Calu3 (cell line): ENCODE measurements at regions of chr2 and their contacts with region 1.

Region 1: GRCh38 chr2:8477552-8478470 is 204.0 kb upstream of the ID2 start:
- DNase-seq: no peak
- H3K4me3 Mint-ChIP-seq: no peak overlapping the region
- H3K27ac Mint-ChIP-seq: peak overlapping the region; percentile 86
- H3K4me1 Mint-ChIP-seq: peaks cover 77% of the 10 kb centered on the region
- H3K27me3 Mint-ChIP-seq: no peaks in the 10 kb centered on the region
- CTCF ChIP-seq: no peak

Region 2: GRCh38 chr2:8103083-8103708 is 374.6 kb before region 1 on chr2:
- CTCF ChIA-PET with region 1: no interaction called
- intact Hi-C with region 1: loop called (anchors 10 kb)
- DNase-seq: peak; percentile 31
- H3K4me3 Mint-ChIP-seq: no peak overlapping the region
- H3K27ac Mint-ChIP-seq: no peak overlapping the region
- H3K4me1 Mint-ChIP-seq: peaks cover 50% of the 10 kb centered on the region
- H3K27me3 Mint-ChIP-seq: no peaks in the 10 kb centered on the region
- CTCF ChIP-seq: no peak

Region 3: GRCh38 chr2:8488001-8488738 is 10.4 kb after region 1 on chr2:
- CTCF ChIA-PET with region 1: interaction called, 5 read pairs
- intact Hi-C with region 1: loop called (anchors 1 kb)
- DNase-seq: no peak
- H3K4me3 Mint-ChIP-seq: no peak overlapping the region
- H3K27ac Mint-ChIP-seq: no peak overlapping the region
- H3K4me1 Mint-ChIP-seq: peaks cover 20% of the 10 kb centered on the region
- H3K27me3 Mint-ChIP-seq: no peaks in the 10 kb centered on the region
- CTCF ChIP-seq: no peak

Region 4: DNA sequence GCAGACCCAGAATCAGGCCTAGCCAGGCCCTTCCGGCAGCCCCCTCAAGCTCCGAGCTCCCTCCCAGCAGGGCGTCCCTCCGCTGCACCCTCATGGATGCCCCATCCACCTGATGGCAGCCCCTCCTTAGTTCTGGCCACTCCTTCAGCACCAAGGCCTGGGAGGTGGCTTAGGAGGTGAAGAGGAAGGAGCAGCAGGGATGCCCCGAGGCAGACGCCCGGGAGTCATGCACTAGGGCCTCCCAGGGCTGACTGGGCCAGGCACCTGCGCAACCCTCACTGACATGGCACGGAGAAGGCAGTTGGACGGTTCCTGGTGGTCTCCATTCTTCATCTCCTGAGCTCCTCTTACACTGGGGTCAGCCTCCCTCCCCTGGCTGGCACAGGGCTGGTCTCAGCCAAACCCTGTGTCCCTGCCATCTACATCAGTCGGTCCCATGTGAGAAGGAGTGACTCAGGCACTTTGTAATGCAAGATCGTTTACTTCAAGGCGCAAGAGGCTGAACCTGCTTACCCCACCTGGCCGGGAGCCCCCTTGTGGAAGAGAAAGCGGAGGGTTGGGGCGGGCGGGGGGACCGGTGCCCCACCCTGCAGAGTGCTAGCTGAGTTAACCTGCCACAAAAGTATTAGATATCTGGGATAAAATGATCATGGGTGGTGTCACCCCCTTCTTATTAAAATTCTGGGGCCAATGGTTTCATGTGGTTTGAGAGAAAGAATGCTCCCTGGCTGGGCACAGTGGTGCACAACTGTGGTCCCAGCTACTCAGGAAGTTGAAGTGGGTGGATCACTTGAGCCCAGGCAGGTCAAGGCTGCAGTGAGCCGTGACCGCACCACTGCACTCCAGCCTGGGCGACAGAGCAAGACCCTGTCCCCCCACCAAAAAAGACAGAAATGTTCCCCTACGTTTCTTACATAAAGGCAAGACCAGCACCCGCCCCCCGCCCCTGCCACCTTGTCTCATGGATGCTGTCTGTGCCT is 150.7 kb after region 1 on chr2:
- CTCF ChIA-PET with region 1: no interaction called
- intact Hi-C with region 1: loop called (anchors 5 kb)
- DNase-seq: peak; percentile 68
- H3K4me3 Mint-ChIP-seq: peak overlapping the region; percentile 52
- H3K27ac Mint-ChIP-seq: peak overlapping the region; percentile 60
- H3K4me1 Mint-ChIP-seq: peaks cover 56% of the 10 kb centered on the region
- H3K27me3 Mint-ChIP-seq: no peaks in the 10 kb centered on the region
- CTCF ChIP-seq: peak; percentile 48